CD14-positive monocyte (primary cell): ENCODE measurements at regions of chr14 and their contacts with region 1.

Region 1: GRCh38 chr14:100617410-100618317 is 30.4 kb upstream of the BEGAIN start:
- DNase-seq: peak in 1 of 3 donors; percentile 35
- H3K4me3 ChIP-seq: peak overlapping the region in 1 of 3 experiments; percentile 59
- H3K4me3 Mint-ChIP-seq: peak overlapping the region; percentile 68 to 86
- H3K27ac ChIP-seq: no peak overlapping the region
- H3K27ac Mint-ChIP-seq: peak overlapping the region in 5 of 7 donors; percentile 72 to 90 (median 77)
- H3K4me1 ChIP-seq: peaks cover 47 to 48% of the 10 kb centered on the region in 2 donors
- H3K4me1 Mint-ChIP-seq: peaks cover 48% of the 10 kb centered on the region
- H3K27me3 ChIP-seq: no peaks in the 10 kb centered on the region
- H3K27me3 Mint-ChIP-seq: peaks cover 8 to 10% (median 8%) of the 10 kb centered on the region in 3 donors
- CTCF ChIP-seq: no peak

Region 2: GRCh38 chr14:100263144-100263543 is 354.5 kb before region 1 on chr14:
- intact Hi-C with region 1: loop called in 1 of 2 experiments (anchors 10 kb)
- DNase-seq: no peak
- H3K4me3 ChIP-seq: no peak overlapping the region
- H3K4me3 Mint-ChIP-seq: no peak overlapping the region
- H3K27ac ChIP-seq: no peak overlapping the region
- H3K27ac Mint-ChIP-seq: peak overlapping the region in 2 of 7 donors; percentile 2 to 50
- H3K4me1 ChIP-seq: no peaks in the 10 kb centered on the region
- H3K4me1 Mint-ChIP-seq: peaks cover 20% of the 10 kb centered on the region
- H3K27me3 ChIP-seq: no peaks in the 10 kb centered on the region
- H3K27me3 Mint-ChIP-seq: no peaks in the 10 kb centered on the region
- CTCF ChIP-seq: no peak

Region 3: GRCh38 chr14:100547633-100548294 is 69.9 kb before region 1 on chr14:
- intact Hi-C with region 1: loop called in 1 of 2 experiments (anchors 5 kb)
- DNase-seq: peak; percentile 86 to 95 (median 93)
- H3K4me3 ChIP-seq: peak overlapping the region in 1 of 3 experiments; percentile 71
- H3K4me3 Mint-ChIP-seq: peak overlapping the region; percentile 84 to 93
- H3K27ac ChIP-seq: peak overlapping the region; percentile 78 to 99
- H3K27ac Mint-ChIP-seq: peak overlapping the region; percentile 87 to 99 (median 94)
- H3K4me1 ChIP-seq: peaks cover 28 to 32% of the 10 kb centered on the region in 2 donors
- H3K4me1 Mint-ChIP-seq: peaks cover 39% of the 10 kb centered on the region
- H3K27me3 ChIP-seq: no peaks in the 10 kb centered on the region
- H3K27me3 Mint-ChIP-seq: peaks cover 6 to 25% (median 17%) of the 10 kb centered on the region in 3 donors
- CTCF ChIP-seq: no peak